Calu3 (cell line): ENCODE measurements at regions of chr5 and their contacts with region 1.

Region 1: DNA sequence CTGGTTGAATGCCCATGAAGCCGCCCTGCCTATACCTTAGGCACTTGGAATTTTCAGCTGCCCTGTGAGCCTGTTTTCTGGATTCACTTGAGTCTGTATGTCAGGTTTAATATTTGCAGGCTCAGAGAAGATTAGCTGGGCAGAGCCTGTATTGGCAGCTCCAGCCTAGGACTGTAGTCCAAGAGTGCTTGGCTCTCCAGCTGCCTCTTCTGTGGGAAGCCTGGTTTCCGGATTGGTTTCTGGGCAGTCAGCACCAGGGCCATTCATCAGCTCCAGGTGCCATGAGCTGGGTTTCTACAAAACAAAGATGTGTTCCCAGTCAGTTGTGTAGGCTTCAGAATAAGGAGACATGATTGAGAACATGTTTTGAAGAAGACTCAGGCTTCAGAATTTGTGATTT is 90.1 kb downstream of the ARHGAP26 start:
- DNase-seq: no peak
- H3K4me3 Mint-ChIP-seq: no peak overlapping the region
- H3K27ac Mint-ChIP-seq: no peak overlapping the region
- H3K4me1 Mint-ChIP-seq: peaks cover 91% of the 10 kb centered on the region
- H3K27me3 Mint-ChIP-seq: no peaks in the 10 kb centered on the region
- CTCF ChIP-seq: no peak

Region 2: DNA sequence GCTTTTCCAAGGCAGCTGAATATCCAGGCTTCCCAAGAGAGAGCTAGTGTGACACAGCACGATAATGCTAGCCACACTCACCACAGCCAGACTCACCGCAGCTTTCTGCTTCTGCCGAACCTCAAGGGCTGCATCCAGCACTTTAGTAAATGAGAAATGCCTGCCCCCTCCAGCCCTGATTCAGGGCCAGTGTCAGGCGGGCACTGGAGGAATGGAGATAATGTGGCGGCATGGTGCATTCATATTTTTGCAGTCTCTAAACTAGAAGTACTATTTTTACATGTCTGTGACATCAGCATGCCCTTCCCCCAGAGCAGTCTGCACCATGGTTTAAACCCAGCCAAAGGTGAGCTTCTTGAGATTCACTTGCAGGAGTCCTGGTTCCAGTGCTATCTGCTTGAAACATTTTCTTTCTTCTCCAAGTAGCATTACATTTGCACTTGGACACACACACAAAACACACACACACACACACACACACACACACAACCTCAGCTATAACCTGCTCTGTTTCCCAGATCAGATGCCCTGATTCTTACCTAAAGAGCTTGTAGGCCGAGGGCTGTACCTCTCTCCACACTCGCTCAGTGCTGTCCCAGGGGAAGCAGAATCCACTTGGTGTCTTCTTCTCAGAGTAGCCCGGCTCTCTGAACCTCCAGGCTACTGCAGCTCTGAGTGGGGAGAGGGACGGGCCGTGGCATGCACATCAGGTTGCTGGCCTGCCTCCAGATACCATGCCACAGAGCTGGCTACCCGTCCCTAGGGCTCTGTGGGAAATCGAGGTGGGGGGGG is 174.7 kb before region 1 on chr5 and contains the start of gene FGF1:
- CTCF ChIA-PET with region 1: no interaction called
- intact Hi-C with region 1: no loop called
- DNase-seq: no peak
- H3K4me3 Mint-ChIP-seq: no peak within 1 kb of the TSS
- H3K27ac Mint-ChIP-seq: no peak within 1 kb of the TSS
- H3K4me1 Mint-ChIP-seq: peaks cover 36% of the 10 kb centered on the region
- H3K27me3 Mint-ChIP-seq: no peaks in the 10 kb centered on the region
- CTCF ChIP-seq: no peak
- total RNA-seq, gene FGF1: not detected in 2 replicates

Region 3: GRCh38 chr5:142845402-142845921 is 14.8 kb before region 1 on chr5:
- CTCF ChIA-PET with region 1: interaction called, 6 read pairs
- intact Hi-C with region 1: loop called (anchors 2 kb)
- DNase-seq: no peak
- H3K4me3 Mint-ChIP-seq: peak overlapping the region; percentile 44
- H3K27ac Mint-ChIP-seq: peak overlapping the region; percentile 79
- H3K4me1 Mint-ChIP-seq: peaks cover 78% of the 10 kb centered on the region
- H3K27me3 Mint-ChIP-seq: no peaks in the 10 kb centered on the region
- CTCF ChIP-seq: no peak